ENCODE measurements at regions of chr3 and their contacts with region 1.

Region 1: DNA sequence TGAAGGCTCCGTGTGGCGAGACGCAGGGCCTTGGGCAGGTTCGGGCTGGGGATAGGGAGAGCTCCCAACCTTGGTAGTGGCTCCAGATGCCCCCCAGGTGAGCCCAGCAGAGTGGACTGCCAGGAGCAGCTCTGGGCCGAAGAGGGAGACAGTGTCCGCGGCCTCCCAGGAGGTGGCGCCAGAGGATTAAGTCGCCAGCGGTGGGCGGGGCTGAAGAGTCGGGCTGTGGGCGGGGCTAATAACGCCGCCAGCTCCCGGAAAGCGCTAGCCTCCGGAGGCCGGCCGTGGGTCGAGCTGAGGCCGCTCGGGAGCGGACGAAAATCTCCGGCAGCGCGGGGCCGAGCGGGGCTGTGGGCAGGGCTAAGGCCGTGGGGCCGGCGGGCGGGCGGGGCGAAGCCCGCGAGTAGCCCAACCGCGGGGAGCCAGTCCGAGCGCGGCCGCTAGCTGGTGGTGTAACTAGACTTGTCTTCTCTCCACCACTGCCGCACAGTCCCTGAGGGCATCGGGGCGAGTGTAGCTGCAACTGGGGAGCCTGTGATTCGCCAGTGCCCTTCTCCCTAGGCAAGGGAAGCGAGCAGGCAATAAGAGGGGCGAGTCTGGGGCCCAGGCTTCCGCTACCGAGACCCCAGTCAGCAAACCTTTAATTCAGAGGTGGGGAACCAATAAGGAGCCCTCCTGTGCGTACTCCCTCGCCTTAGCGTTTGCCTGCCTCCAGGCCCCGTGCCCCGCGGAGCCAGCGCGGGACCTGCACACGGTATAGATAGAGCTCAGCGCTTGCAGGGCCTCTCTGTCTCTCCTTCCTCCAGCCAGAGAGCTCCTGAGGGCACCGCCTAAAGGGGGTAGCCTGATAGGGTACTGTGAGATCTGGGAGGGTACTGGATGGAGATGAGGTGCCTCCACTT is 14.4 kb upstream of the BSN start:
- DNase-seq: peak; percentile 92
- H3K4me3 Mint-ChIP-seq: peak overlapping the region; percentile 66
- H3K27ac Mint-ChIP-seq: no peak overlapping the region
- H3K4me1 Mint-ChIP-seq: peaks cover 7% of the 10 kb centered on the region
- H3K27me3 Mint-ChIP-seq: peaks cover 16% of the 10 kb centered on the region

Region 2: DNA sequence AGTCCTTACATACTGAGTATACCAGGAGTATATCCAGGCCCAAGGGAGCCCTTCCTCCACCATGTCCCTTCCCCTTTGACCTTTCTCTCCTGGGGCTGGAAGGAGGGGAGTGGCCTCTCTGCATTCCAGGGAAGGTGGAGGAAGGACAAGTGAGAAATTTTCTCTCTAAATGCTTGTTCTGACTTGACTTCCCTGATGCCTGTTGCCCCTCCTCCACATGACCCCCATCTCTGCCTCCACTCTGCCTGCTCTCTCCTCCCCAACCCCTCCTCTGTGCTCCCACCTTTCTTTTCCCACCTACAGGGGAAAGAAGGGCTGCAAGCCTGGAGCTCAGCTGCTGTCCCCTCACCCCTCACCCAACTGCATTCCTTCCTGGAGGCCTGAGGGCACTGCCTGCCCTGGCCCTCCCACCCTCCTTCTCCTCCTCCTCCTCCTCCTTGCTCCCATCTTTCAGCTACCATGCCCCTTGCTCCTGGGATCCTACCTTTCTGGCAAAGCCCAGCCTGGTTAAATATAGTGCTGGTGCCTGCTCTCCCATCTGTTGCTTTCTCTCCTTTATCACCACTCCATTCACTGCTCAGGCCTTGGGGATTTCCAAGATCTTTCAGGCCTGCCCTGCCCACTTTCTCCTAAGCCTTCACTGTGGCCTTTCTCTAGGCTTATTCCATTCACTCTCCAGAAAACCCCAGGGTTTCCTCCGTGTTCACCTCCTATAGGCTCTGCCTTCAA is 78.3 kb before region 1 on chr3:
- CTCF ChIA-PET with region 1: no interaction called
- POLR2A ChIA-PET with region 1: no interaction called
- DNase-seq: no peak
- H3K4me3 Mint-ChIP-seq: no peak overlapping the region
- H3K27ac Mint-ChIP-seq: no peak overlapping the region
- H3K4me1 Mint-ChIP-seq: no peaks in the 10 kb centered on the region
- H3K27me3 Mint-ChIP-seq: no peaks in the 10 kb centered on the region

Region 3: GRCh38 chr3:49553692-49554632 is 14.1 kb after region 1 on chr3 and contains the start of gene BSN:
- CTCF ChIA-PET with region 1: interaction called, 24 read pairs
- POLR2A ChIA-PET with region 1: interaction called, 13 read pairs
- DNase-seq: peak; percentile 83
- H3K4me3 Mint-ChIP-seq: peak within 1 kb of the TSS; percentile 75
- H3K27ac Mint-ChIP-seq: no peak within 1 kb of the TSS
- H3K4me1 Mint-ChIP-seq: peaks cover 29% of the 10 kb centered on the region
- H3K27me3 Mint-ChIP-seq: peaks cover 56% of the 10 kb centered on the region
- total RNA-seq, gene BSN: 0.03 to 0.05 TPM

Region 4: GRCh38 chr3:49656541-49657112 is 116.7 kb after region 1 on chr3:
- CTCF ChIA-PET with region 1: interaction called, 12 read pairs
- POLR2A ChIA-PET with region 1: interaction called, 3 read pairs
- DNase-seq: no peak
- H3K4me3 Mint-ChIP-seq: no peak overlapping the region
- H3K27ac Mint-ChIP-seq: no peak overlapping the region
- H3K4me1 Mint-ChIP-seq: no peaks in the 10 kb centered on the region
- H3K27me3 Mint-ChIP-seq: no peaks in the 10 kb centered on the region

Region 5: GRCh38 chr3:49673715-49674496 is 134.0 kb after region 1 on chr3 and contains the start of gene APEH:
- CTCF ChIA-PET with region 1: interaction called, 247 read pairs
- POLR2A ChIA-PET with region 1: interaction called, 43 read pairs
- DNase-seq: peak; percentile 99
- H3K4me3 Mint-ChIP-seq: peak within 1 kb of the TSS; percentile 91
- H3K27ac Mint-ChIP-seq: peak within 1 kb of the TSS; percentile 98
- H3K4me1 Mint-ChIP-seq: peaks cover 37% of the 10 kb centered on the region
- H3K27me3 Mint-ChIP-seq: no peaks in the 10 kb centered on the region
- total RNA-seq, gene APEH: 132 to 136 TPM

Region 6: DNA sequence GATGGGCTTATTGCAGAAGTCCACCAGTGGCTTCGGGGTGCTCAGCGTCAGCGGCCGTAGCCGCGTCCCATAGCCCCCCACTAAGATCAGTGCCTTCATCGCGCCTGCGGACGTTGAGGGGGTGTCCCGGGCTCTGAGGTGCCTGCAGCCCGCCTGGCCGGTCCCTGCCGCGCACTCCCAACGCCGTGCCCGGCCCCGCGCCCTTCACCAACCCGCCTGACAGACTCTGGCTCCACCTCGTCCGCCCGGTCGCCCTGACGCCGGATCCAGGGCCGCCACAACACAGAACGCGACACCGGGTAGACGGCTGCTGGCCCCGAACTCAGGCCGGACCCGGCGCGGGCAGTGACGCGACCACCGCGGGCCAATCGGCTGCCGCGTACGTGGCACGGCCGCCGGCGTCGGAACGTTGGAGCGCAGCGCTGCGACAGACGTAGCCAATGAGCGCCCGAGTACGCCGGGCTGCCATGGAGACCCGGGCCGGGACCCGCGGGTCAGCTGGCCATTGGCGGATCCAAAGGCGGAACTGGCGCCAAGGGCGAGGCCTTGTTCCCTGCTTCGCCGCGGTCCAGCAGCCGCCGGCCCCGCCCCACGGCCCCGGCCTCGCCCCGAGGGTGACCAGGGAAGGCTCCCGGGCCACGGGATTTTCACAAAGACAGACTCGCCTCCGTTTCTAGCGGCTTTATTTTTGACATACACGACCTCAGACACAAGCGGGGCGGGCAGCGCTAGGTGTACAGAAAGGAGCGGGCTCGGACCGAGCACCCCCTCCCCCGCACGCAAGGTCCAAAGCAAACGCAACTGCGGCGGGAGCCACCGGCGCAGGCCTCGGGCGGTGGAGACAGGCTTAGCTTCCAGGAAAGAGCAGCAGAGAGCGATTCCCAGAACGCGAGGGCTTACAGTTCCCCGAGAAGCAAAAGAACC is 184.0 kb after region 1 on chr3 and contains the start of gene GMPPB:
- CTCF ChIA-PET with region 1: interaction called, 12 read pairs
- POLR2A ChIA-PET with region 1: interaction called, 4 read pairs
- DNase-seq: peak; percentile 96
- H3K4me3 Mint-ChIP-seq: peak within 1 kb of the TSS; percentile 91
- H3K27ac Mint-ChIP-seq: peak within 1 kb of the TSS; percentile 97
- H3K4me1 Mint-ChIP-seq: peaks cover 44% of the 10 kb centered on the region
- H3K27me3 Mint-ChIP-seq: no peaks in the 10 kb centered on the region
- total RNA-seq, gene GMPPB: 48.2 to 49.0 TPM